ENCODE measurements at regions of chr12 and their contacts with region 1.

Region 1: DNA sequence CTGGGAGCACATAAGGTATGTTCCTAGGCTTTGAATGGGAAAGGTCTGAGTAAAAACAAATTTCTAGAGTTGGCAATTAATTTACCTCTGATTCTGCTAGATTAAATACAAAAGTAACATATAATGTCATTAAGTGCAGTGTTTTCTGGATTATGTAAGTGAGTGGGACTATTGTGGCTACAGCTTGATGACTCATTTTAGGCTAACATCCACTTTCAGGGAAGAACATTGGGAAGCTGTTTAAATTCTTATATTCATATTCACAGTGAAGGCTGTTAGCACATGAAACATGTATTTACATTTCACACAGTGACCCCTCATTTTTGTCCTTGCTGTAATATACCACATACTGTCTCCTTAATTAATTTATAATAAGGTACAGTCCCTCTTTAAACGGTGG is 13.2 kb upstream of the BMAL2 start:
- DNase-seq: no peak
- H3K4me3 ChIP-seq: no peak overlapping the region
- H3K27ac ChIP-seq: no peak overlapping the region
- H3K4me1 ChIP-seq: no peaks in the 10 kb centered on the region
- H3K27me3 ChIP-seq: no peaks in the 10 kb centered on the region
- CTCF ChIP-seq: no peak
- EP300 ChIP-seq: no peak
- POLR2A ChIP-seq: no peak

Region 2: DNA sequence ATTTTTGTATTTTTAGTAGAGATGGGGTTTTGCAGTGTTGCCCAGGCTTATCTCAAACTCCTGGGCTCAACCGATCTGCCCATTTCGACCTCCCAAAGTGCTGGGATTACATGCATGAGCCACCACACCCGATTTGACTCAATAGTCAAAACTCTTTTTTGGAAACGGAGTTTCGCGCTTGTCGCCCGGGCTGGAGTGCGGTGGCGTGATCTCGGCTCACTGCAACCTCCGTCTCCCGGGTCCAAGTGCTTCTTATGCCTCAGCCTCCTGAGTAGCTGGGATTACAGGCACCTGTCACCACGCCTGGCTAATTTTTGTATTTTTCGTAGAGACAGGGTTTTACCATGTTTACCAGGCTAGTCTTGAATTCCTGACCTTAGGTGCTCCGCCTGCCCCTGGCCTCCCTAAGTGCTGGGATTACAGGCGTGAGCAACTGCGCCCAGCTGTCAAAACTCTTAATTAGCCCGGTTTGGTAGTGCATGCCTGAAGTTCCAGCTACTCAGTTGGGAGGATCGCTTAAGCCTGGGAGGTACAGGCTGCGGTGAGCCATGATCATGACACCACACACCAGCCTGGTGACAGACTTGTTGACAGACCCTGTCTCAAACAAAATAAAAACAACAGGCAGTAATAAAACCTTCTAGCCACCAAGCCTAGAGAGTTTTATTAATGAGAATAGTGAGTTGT is 284.7 kb before region 1 on chr12:
- in situ Hi-C with region 1: loop called (anchors 10 to 25 kb)
- intact Hi-C with region 1: no loop called
- DNase-seq: no peak
- H3K4me3 ChIP-seq: no peak overlapping the region
- H3K27ac ChIP-seq: no peak overlapping the region
- H3K4me1 ChIP-seq: no peaks in the 10 kb centered on the region
- H3K27me3 ChIP-seq: no peaks in the 10 kb centered on the region
- CTCF ChIP-seq: no peak
- EP300 ChIP-seq: no peak
- POLR2A ChIP-seq: no peak

Region 3: GRCh38 chr12:27272701-27273028 is 46.7 kb before region 1 on chr12:
- in situ Hi-C with region 1: no loop called
- intact Hi-C with region 1: no loop called
- DNase-seq: no peak
- H3K4me3 ChIP-seq: peak overlapping the region in 1 of 4 donors; percentile 0
- H3K27ac ChIP-seq: peak overlapping the region; percentile 68 to 78 (median 76)
- H3K4me1 ChIP-seq: peaks cover 25 to 76% (median 43%) of the 10 kb centered on the region in 4 donors
- H3K27me3 ChIP-seq: no peaks in the 10 kb centered on the region
- CTCF ChIP-seq: no peak
- EP300 ChIP-seq: no peak
- POLR2A ChIP-seq: no peak

Region 4: DNA sequence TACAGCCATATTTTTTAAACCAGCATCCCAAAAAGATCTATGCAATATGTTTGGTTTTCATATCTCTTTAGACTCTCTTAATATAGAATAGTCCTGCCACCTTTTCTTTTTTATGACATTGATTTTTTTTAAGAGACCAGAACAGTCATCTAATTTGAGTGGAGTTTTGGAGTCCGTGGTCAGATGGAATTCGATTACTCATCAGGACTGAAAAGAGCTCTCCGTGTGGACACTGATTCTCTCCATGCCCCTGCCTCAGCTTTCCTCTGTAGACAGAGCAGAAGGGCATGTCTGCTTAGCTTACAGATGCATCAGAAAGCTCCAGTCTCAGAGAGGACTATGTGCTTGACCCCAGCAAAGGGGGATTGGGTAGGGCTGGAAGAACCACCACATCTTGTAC is 154.9 kb after region 1 on chr12:
- in situ Hi-C with region 1: no loop called
- intact Hi-C with region 1: no loop called
- DNase-seq: no peak
- H3K4me3 ChIP-seq: no peak overlapping the region
- H3K27ac ChIP-seq: no peak overlapping the region
- H3K4me1 ChIP-seq: peaks cover 0 to under 1% (median 0%) of the 10 kb centered on the region in 4 donors
- H3K27me3 ChIP-seq: no peaks in the 10 kb centered on the region
- CTCF ChIP-seq: no peak
- EP300 ChIP-seq: no peak
- POLR2A ChIP-seq: no peak